Activated CD4-positive, alpha-beta memory T cell treated with anti-CD3 and anti-CD28 coated beads, Interleukin-2, amount 10 ng/mL, durations not matched to agents 7 days and 5 days (primary cell): ENCODE measurements at regions of chr14 and their contacts with region 1.

Region 1: DNA sequence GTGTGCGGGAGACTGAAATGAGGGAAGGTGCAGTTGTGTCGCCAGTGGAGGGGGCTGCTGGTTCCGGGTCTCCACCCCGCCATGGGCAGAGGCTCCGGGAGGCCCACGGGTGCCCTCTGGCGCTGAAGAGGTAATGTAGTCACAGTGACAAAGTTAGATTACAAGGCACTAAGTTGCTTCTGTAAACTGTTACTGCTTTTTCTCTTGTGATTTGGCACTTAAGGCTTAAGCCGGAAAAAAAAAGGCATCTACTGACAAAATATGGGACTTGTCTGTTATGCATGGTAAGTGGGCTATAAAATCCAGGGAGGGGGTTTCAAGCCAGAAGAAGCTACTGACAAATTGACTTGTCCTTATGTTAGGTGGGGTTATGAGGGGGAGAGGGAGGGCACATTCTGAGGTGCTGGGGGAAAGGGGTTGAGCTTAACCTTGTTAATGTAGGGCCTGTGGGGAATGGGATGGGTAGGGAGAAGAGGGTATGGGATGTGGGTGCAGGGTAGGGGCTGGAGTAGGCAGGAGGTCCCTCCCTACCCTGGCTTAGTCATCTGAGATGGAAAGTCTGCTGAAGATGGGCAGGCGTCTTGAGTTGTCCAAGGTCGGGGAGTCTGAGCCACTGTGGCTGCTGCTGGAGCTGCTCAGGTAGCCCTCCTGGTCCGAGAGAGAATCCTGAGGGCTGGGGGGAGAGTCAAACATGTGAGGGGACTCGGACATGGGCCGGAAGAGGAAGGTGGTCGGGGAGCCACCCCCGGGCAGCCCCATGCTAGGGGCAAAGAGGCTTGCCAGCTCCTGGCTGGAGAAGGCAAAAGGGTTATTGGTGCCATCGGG is 3.7 kb downstream of the ZFP36L1 start:
- DNase-seq: peak; percentile 91
- H3K4me3 Mint-ChIP-seq: peak overlapping the region; percentile 92
- H3K27ac Mint-ChIP-seq: peak overlapping the region; percentile 100
- H3K4me1 Mint-ChIP-seq: peaks cover 57% of the 10 kb centered on the region
- H3K27me3 Mint-ChIP-seq: no peaks in the 10 kb centered on the region

Region 2: DNA sequence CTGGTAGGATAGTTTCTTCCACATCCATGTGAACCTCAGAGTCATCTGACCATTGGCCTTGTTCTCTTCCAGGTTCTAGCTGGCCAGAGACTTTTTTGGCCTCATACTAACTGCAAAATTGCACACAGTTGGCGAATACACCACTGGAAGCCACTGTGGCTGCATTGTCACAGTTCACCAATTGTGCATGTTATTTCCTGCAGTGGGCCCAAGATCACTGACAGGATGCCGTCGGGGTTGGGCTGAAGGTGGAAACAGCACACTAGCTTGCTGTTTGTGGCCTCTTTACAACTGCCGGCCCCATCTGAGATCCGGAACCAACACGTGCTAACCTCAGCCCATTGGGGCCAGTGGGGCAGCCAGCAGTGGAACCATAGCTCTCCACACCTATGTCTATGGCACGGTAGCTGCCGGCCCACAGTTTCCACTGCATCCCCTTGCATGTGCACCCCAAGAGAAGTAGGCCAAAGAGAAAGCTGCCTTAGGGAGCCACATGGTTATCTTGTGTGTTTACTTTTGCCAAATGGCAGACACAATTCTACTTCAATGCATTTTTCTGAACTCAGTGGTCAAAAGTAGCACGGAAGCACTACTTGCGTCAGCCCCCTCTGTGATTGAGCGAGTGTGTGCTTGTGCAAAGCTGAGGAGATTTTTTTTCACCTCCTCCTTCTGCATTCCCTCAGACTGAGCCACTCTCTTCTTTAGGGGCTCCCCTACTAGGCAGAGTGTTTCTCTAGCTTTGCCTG is 505.7 kb before region 1 on chr14:
- CTCF ChIA-PET with region 1: interaction called, 23 read pairs
- POLR2A ChIA-PET with region 1: interaction called, 35 read pairs
- DNase-seq: peak; percentile 79
- H3K4me3 Mint-ChIP-seq: peak overlapping the region; percentile 47
- H3K27ac Mint-ChIP-seq: peak overlapping the region; percentile 96
- H3K4me1 Mint-ChIP-seq: peaks cover 48% of the 10 kb centered on the region
- H3K27me3 Mint-ChIP-seq: no peaks in the 10 kb centered on the region

Region 3: GRCh38 chr14:68663385-68664076 is 125.7 kb before region 1 on chr14:
- CTCF ChIA-PET with region 1: interaction called, 4 read pairs
- POLR2A ChIA-PET with region 1: interaction called, 21 read pairs
- DNase-seq: peak; percentile 33
- H3K4me3 Mint-ChIP-seq: peak overlapping the region; percentile 70
- H3K27ac Mint-ChIP-seq: peak overlapping the region; percentile 79
- H3K4me1 Mint-ChIP-seq: peaks cover 34% of the 10 kb centered on the region
- H3K27me3 Mint-ChIP-seq: no peaks in the 10 kb centered on the region

Region 4: GRCh38 chr14:68734231-68734775 is 54.9 kb before region 1 on chr14:
- CTCF ChIA-PET with region 1: interaction called, 4 read pairs
- POLR2A ChIA-PET with region 1: interaction called, 10 read pairs
- DNase-seq: peak; percentile 50
- H3K4me3 Mint-ChIP-seq: no peak overlapping the region
- H3K27ac Mint-ChIP-seq: peak overlapping the region; percentile 62
- H3K4me1 Mint-ChIP-seq: peaks cover 35% of the 10 kb centered on the region
- H3K27me3 Mint-ChIP-seq: no peaks in the 10 kb centered on the region

Region 5: DNA sequence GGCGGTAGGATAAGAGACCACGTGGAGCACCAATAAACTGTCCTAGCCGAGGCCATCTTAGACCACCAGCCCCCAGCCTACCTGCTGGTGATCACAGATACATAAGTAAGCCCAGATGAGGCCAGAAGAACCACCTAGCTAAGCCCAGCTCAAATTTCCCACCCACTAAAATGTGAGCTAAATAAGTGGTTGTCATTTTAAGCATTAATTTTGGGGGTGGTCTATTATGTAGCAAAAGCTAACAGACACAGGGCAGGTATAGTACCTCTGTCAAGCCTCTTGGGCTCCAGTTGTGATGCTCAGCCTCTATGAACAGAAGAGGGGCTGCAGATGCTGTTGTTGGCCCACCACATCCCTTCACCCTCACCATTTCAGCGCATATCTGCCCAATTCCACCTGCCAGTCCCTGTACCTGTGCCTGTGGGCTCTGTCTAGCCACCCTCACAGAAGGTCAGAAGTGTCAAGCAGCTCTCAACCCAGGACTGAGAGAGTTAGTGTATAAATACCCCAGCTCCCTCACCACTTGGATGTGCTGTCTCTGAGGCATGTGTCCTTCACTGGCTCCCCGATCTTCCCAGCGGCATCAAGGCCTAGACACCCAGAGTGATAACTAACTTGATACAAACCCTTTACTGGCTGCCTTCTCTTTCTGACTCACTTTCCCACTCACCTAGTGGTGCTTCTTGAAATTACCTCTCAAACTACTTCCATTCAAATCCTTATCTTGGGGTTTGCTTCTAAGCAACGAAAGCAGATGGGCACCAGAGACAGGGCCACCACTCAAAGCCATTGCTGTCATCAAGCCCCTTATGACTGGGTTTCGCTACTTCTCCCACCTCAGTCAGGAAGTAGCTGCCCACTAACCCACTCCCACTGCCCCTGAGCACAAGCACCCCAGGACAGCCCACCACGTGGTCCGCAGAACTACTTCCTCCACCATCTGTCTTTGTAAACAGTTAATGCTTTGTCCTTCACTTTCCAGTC is 13.8 kb before region 1 on chr14:
- CTCF ChIA-PET with region 1: interaction called, 43 read pairs
- POLR2A ChIA-PET with region 1: interaction called, 313 read pairs
- DNase-seq: no peak
- H3K4me3 Mint-ChIP-seq: no peak overlapping the region
- H3K27ac Mint-ChIP-seq: no peak overlapping the region
- H3K4me1 Mint-ChIP-seq: peaks cover 60% of the 10 kb centered on the region
- H3K27me3 Mint-ChIP-seq: no peaks in the 10 kb centered on the region

Region 6: GRCh38 chr14:68884031-68885030 is 95.1 kb after region 1 on chr14:
- CTCF ChIA-PET with region 1: no interaction called
- POLR2A ChIA-PET with region 1: no interaction called
- DNase-seq: no peak
- H3K4me3 Mint-ChIP-seq: no peak overlapping the region
- H3K27ac Mint-ChIP-seq: no peak overlapping the region
- H3K4me1 Mint-ChIP-seq: no peaks in the 10 kb centered on the region
- H3K27me3 Mint-ChIP-seq: no peaks in the 10 kb centered on the region

Region 7: GRCh38 chr14:68911594-68912227 is 122.5 kb after region 1 on chr14:
- CTCF ChIA-PET with region 1: no interaction called
- POLR2A ChIA-PET with region 1: no interaction called
- DNase-seq: peak; percentile 73
- H3K4me3 Mint-ChIP-seq: no peak overlapping the region
- H3K27ac Mint-ChIP-seq: no peak overlapping the region
- H3K4me1 Mint-ChIP-seq: peaks cover 1% of the 10 kb centered on the region
- H3K27me3 Mint-ChIP-seq: no peaks in the 10 kb centered on the region

Region 8: DNA sequence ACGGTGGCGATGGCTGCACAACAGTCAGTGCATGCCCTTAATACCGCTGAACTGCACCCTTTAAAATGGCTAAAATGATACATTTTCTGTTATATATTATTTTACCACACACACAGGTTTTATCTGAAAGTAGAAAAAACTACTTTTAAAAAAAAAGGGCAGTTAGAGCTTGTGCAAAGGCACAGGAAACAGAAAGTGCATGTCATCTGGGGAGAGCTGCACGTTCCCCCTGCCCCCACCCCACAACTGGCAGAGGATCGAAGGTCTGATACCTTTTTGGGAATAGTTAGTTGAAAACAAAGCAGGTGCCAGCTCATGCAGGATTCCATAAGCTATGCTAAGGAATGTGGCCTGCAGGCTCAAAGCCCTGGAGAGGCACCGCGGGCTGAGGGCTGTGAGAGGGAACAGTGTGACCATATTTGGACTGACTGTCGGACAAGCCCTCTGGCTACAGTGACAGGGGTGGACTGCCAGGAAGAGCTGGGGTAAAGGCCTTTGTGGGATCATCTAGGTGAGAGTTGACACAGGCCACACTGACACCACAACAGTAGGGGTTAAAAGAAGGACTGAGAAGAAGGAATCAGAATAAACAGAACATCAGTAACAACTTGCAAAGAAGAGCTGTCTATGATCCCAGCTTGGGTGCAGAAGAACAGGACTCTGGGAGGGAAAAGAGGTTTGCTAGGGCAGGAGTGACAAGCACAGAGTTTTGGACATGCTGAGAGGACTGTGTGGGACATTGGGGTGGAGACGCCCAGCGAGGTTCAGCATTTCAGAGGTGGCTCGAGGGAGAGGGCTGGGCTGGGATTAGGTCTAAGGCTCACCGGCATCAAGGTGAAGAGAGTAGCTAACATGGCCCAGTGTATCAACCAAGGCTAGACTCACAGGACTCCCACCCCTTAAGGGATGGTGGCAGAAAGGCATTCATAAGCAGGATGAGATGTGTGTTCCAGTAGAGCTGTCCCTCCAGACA is 135.3 kb after region 1 on chr14:
- CTCF ChIA-PET with region 1: no interaction called
- POLR2A ChIA-PET with region 1: no interaction called
- DNase-seq: no peak
- H3K4me3 Mint-ChIP-seq: no peak overlapping the region
- H3K27ac Mint-ChIP-seq: no peak overlapping the region
- H3K4me1 Mint-ChIP-seq: peaks cover 13% of the 10 kb centered on the region
- H3K27me3 Mint-ChIP-seq: no peaks in the 10 kb centered on the region